ENCODE measurements at regions of chr1 and their contacts with region 1.

Region 1: DNA sequence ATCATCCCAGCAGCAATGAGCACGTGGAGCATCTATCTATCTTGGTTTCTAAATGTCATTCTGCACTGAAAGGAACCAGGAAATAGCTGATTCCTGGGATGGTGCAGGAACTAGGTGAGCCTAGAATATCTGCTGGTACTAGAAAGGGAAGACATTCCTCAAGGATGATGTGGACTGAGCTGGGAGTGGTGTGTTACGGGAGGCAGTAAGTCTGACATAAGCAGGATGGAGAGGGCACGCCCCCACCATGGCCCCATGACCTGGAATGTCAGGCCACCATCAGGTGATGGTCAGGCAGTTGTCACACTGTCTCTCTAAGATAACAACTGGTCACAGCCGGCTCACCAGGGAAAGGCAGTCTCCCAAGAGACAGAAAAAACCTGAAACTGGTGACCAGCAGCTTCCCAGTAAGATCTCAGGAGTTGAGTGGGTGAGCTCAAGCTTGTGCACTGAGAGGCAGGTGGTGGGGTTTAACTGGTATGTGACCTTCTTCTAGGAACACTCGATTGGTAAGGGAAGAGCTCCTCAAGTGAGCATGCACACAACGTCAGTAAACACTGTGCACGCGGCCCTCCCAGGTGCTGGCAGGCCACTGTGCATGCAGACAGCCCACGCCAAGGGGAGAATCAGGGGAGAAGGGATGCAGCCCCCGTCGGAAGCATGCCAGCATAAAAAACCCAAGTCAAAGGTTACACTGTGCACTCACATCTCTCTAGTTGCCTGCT is 148.7 kb downstream of the ADSS2 start:
- DNase-seq: no peak
- H3K4me3 ChIP-seq: no peak overlapping the region
- H3K27ac ChIP-seq: no peak overlapping the region
- H3K4me1 ChIP-seq: no peaks in the 10 kb centered on the region
- H3K27me3 ChIP-seq: no peaks in the 10 kb centered on the region
- CTCF ChIP-seq: no peak
- POLR2A ChIP-seq: no peak

Region 2: GRCh38 chr1:244445320-244446181 is 142.5 kb after region 1 on chr1:
- intact Hi-C with region 1: loop called (anchors 10 kb)
- DNase-seq: no peak
- H3K4me3 ChIP-seq: no peak overlapping the region
- H3K27ac ChIP-seq: no peak overlapping the region
- H3K4me1 ChIP-seq: no peaks in the 10 kb centered on the region
- H3K27me3 ChIP-seq: no peaks in the 10 kb centered on the region
- CTCF ChIP-seq: no peak
- POLR2A ChIP-seq: no peak